ENCODE measurements at regions of chr3 and their contacts with region 1.

Region 1: GRCh38 chr3:120095226-120095978 is 1.2 kb upstream of the GSK3B start:
- DNase-seq: peak; percentile 95
- ATAC-seq: peak; percentile 82 to 84
- H3K4me3 ChIP-seq: peak overlapping the region; percentile 80
- H3K27ac ChIP-seq: peak overlapping the region; percentile 100
- H3K4me1 ChIP-seq: peaks cover 26% of the 10 kb centered on the region
- H3K27me3 ChIP-seq: no peaks in the 10 kb centered on the region
- CTCF ChIP-seq: no peak

Region 2: GRCh38 chr3:119902061-119902460 is 193.3 kb before region 1 on chr3:
- intact Hi-C with region 1: loop called (anchors 10 kb)
- DNase-seq: no peak
- ATAC-seq: no peak
- H3K4me3 ChIP-seq: no peak overlapping the region
- H3K27ac ChIP-seq: no peak overlapping the region
- H3K4me1 ChIP-seq: no peaks in the 10 kb centered on the region
- H3K27me3 ChIP-seq: no peaks in the 10 kb centered on the region
- CTCF ChIP-seq: no peak

Region 3: GRCh38 chr3:120299403-120299802 is 204.0 kb after region 1 on chr3:
- intact Hi-C with region 1: no loop called
- DNase-seq: no peak
- ATAC-seq: peak; percentile 42 to 45
- H3K4me3 ChIP-seq: no peak overlapping the region
- H3K27ac ChIP-seq: no peak overlapping the region
- H3K4me1 ChIP-seq: no peaks in the 10 kb centered on the region
- H3K27me3 ChIP-seq: no peaks in the 10 kb centered on the region
- CTCF ChIP-seq: no peak